Right cardiac atrium (tissue), 5 donors: ENCODE measurements at regions of chr1 and their contacts with region 1.

Region 1: DNA sequence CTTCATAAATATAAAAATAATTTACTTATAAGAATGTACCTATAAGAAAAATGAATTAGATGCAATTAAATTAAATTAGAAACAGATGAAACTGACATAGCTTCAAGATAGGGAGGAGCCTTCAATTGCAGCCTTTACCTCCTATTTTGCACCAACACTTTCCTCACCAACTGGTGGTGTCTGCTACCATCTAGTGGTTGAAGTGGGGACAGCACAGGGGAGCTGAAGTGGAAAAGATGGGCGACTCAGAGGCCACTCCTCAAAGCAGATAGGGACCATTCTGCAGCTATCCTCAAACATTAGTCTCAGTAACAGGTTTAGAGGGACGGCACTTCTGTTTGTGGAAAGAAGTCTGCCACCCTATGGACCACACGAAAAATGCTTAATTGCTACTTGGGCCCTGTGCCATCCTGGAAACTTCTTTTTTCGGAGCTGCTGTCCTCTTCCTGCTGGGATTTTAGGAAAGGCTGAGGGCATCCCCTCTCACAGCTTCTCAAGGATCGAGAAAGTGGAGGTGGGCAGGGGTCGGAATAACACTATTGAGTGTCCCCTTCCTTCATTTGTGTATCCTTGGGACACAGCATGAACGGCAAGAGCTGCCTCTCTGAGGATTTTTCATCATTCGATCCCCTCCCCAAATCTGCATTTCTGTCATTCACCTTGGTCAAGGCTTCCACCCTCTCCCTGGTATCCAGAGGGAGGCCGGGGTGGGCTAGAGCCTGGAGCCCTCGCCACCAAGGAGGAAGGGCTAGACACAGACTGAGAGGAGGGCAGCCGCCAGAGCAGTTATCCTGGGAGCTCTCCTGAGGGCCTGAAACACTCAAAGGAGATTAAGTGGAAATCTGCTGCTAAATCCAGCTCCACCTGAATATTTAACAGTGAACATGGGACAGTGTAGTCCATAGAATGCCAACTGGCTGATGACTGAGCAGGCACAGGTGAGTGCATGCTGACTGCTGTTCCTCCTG is 9.6 kb downstream of the PROK1 start:
- DNase-seq: peak; percentile 61 to 85 (median 77)
- ATAC-seq: peak; percentile 70 to 86
- H3K4me3 ChIP-seq: no peak overlapping the region
- H3K27ac ChIP-seq: no peak overlapping the region
- H3K4me1 ChIP-seq: no peaks in the 10 kb centered on the region
- H3K27me3 ChIP-seq: no peaks in the 10 kb centered on the region

Region 2: GRCh38 chr1:110203021-110203661 is 257.4 kb before region 1 on chr1:
- intact Hi-C with region 1: loop called in 3 of 4 experiments (anchors 2 kb)
- DNase-seq: peak in 1 of 3 donors; percentile 46
- ATAC-seq: peak; percentile 28 to 61
- H3K4me3 ChIP-seq: no peak overlapping the region
- H3K27ac ChIP-seq: no peak overlapping the region
- H3K4me1 ChIP-seq: no peaks in the 10 kb centered on the region
- H3K27me3 ChIP-seq: no peaks in the 10 kb centered on the region

Region 3: DNA sequence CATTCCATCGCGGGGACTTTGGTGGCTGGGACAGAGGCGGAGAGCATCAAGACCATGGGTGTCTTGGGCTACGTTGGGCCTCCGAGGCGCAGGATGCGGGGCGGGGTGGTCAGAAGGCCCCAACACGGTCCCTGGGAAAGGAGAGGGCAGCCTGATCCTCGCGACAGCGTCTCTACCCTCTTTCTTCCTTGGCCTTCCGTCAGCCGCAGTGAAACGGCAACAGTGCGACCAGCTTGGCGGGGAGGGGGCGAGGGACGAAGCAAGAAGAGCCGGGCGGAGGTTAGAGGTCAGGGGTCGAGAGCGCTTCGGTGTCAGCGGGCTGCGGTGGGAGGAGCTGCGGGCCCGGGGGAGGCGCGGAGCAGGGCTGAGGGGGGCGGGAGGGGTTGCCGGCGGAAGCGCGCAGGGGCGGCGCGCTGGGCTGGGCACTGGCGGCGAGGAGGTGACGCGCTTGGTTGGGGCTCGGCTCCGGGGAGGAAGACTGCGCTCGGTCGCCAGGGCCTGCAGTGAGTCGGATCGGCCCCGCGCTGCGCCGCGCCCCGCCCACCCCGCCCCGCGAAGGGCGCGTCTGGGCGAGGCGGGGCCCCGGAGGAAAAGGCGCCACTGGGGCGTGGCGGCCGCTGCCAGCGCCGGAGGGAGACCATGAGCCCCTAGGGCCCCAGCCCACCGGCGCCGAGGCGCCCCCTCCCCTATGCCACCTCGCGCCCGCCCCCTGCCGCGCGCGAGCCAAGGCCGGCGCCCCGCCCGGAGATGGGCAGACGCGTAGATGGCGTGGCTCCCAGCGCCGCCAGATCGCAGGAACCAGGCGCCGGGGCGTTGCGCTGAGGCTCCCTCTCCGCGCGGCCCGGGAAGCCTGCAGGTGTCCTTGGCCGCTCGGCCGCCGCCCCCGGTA is 250.6 kb before region 1 on chr1 and contains the start of gene KCNC4:
- intact Hi-C with region 1: loop called in 2 of 4 experiments (anchors 2 kb)
- DNase-seq: peak; percentile 93 to 97 (median 97)
- ATAC-seq: peak; percentile 95
- H3K4me3 ChIP-seq: peak within 1 kb of the TSS; percentile 65
- H3K27ac ChIP-seq: peak within 1 kb of the TSS; percentile 81
- H3K4me1 ChIP-seq: peaks cover 4% of the 10 kb centered on the region
- H3K27me3 ChIP-seq: no peaks in the 10 kb centered on the region
- total RNA-seq, gene KCNC4: 6.5 to 8.5 (median 7.0) TPM

Region 4: DNA sequence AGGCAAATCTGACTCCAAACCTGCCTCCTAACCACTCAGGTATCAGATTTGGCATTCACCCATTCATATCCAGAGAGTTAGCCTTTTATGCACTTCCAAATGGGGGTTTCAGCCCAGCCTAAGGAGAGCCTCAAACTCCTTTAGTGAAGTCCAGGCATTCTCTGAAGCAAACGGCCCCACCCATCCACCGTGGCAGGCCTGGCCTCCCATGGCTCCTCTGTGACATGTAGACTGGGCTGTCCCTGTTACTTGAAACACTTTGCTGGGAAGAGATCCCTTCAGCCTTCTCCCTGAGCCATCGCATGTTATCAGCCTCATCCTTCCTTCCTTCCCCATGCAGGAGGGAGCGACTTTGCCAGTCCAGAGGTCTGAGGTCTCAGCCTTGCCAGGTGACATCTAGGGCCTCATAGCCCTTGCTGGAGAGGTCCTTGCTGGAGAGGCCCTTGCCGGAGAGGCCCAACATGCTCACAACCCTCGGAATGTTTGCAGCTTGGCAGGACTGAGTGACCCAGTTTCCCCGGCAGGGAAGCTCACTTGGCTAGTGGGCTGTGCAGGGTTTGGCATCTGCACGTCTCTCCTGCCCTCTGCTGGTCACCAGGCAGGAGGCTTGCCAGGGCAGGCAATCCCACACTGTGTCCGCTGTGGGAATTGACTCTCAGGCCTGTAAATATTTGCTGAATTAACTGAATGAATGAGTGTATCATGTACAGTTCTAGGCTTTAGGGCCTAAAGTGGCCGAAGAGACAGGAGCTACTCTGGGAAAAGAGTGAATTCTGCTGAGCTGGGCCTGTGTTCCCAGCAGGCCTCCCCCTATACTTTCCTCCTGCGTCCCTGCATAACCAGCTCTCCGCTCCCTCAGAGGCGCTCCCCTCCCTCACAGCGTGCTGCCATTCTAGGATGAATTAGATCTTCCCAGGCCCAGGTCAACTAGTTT is 148.1 kb before region 1 on chr1:
- intact Hi-C with region 1: loop called in 3 of 4 experiments (anchors 5 to 10 kb)
- DNase-seq: peak; percentile 83 to 92 (median 91)
- ATAC-seq: peak; percentile 96 to 97
- H3K4me3 ChIP-seq: no peak overlapping the region
- H3K27ac ChIP-seq: no peak overlapping the region
- H3K4me1 ChIP-seq: peaks cover 3% of the 10 kb centered on the region
- H3K27me3 ChIP-seq: no peaks in the 10 kb centered on the region

Region 5: DNA sequence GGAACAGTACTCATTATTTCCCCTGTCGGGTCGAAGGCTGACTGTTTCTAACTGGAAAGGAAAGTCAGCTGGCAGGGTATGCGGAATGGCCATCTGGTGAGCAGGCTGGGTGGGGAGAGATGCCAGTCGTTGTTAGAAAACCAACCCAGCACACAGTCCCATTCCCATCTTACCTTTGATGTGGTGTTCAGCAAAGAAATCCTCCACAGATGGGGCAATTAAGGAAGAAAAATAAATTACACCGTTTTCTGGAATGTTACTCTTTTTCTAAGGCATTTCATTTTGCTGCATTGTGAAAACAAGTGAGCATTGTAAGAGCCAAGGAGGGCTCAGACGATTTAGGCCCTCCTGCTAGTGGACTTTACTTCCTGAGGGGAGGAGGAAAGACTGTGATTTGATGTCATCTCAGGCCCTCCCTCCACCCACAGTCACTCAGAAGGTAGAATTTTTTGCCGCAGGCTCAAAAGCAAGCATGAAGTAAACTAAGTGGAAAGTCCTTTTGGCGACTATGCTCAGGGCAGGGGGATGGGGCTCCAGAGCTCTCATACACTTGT is 69.8 kb before region 1 on chr1 and contains the start of gene SLC16A4:
- intact Hi-C with region 1: no loop called
- DNase-seq: peak in 1 of 3 donors; percentile 56
- ATAC-seq: peak; percentile 88 to 92
- H3K4me3 ChIP-seq: peak within 1 kb of the TSS; percentile 46
- H3K27ac ChIP-seq: peak within 1 kb of the TSS; percentile 50
- H3K4me1 ChIP-seq: no peaks in the 10 kb centered on the region
- H3K27me3 ChIP-seq: no peaks in the 10 kb centered on the region
- total RNA-seq, gene SLC16A4: 4.6 to 7.3 (median 6.4) TPM

Region 6: GRCh38 chr1:110412576-110412975 is 48.0 kb before region 1 on chr1:
- intact Hi-C with region 1: loop called (anchors 2 to 5 kb)
- DNase-seq: peak; percentile 86 to 90 (median 86)
- ATAC-seq: peak; percentile 72 to 81
- H3K4me3 ChIP-seq: no peak overlapping the region
- H3K27ac ChIP-seq: no peak overlapping the region
- H3K4me1 ChIP-seq: peaks cover 3% of the 10 kb centered on the region
- H3K27me3 ChIP-seq: no peaks in the 10 kb centered on the region